ENCODE measurements at regions of chr11 and their contacts with region 1.

Region 1: DNA sequence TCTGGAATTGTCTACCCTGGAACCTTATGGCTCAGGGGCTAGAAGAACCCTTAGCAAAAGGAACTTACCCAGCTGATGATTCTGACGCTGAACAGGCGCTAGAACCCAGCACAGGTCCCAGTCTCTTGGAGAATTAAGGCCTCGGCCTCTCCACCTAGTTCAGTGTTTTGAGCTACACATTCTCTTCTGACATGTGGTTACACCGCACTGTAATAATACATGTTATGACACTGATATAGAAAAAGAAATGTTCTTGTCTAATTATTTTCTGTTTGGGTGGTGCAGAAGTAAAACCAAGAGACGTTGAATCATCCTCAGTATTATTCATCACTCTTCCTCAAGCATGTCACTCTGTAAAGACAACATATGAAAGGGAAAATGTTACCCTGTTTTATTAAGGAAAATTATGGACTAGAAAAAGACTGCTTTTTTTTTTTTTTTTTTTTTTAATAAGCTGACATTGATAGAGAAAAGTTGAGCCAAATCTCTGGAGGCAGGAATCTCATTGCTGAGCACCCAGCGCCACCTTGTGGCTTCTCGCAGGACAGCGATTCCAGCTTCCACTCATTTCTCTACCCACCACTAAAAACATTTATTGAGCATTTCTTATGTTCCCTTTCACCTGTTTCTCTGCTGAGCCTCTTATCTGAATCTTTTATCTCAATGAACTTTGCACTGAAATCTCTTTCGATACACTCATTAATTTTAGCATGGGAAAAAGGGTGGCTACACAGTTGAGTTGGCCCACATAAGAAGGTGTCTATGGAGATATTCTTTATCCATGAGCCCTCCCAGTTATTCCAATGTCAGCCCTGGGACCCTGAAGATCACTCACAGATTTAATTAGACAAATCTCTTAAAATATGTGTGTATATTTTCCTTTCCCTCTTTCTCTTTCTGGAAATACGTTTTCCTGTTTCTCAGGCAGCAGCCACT is 12.6 kb upstream of the APLNR start:
- DNase-seq: peak; percentile 65 to 74
- ATAC-seq: peak; percentile 60 to 85 (median 70)
- H3K4me3 ChIP-seq: no peak overlapping the region
- H3K27ac ChIP-seq: peak overlapping the region; percentile 18
- H3K4me1 ChIP-seq: peaks cover 14% of the 10 kb centered on the region
- H3K27me3 ChIP-seq: peaks cover 0 to 6% (median 2%) of the 10 kb centered on the region in 3 donors
- CTCF ChIP-seq: peak; percentile 88

Region 2: DNA sequence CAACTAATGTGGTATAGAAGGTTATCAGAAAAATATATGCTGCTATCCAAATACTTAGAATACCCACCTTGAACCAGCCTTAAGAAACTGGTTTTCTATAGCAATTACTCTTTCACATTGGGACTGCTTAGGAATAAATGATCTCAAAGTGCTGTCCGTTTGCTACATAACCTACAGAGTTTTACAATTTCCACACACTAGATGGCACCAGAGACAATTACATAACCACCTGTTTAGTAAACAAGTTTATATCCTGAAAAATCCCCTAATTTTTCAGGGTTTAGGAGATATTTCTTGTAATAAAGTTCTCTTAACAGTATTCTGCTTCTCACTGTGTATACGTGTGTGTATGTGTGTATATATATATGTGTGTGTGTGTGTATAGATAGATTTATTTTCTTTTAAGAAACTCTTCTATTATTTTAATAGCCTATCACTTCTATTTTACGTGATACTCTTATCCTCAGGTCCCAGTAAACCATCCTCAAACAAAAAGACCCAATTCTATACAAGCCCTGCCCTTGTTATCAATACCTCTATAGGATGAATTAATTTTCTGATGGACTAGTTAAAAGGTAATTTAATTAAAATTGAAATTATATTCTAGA is 1306.8 kb before region 1 on chr11:
- intact Hi-C with region 1: loop called in 1 of 2 experiments (anchors 10 kb)
- DNase-seq: no peak
- ATAC-seq: no peak
- H3K4me3 ChIP-seq: no peak overlapping the region
- H3K27ac ChIP-seq: no peak overlapping the region
- H3K4me1 ChIP-seq: no peaks in the 10 kb centered on the region
- H3K27me3 ChIP-seq: no peaks in the 10 kb centered on the region
- CTCF ChIP-seq: peak; percentile 41

Region 3: GRCh38 chr11:56841210-56841810 is 408.3 kb before region 1 on chr11:
- intact Hi-C with region 1: loop called (anchors 2 to 10 kb)
- DNase-seq: peak; percentile 15 to 38
- ATAC-seq: peak in 3 of 4 donors; percentile 47 to 74 (median 64)
- H3K4me3 ChIP-seq: no peak overlapping the region
- H3K27ac ChIP-seq: no peak overlapping the region
- H3K4me1 ChIP-seq: no peaks in the 10 kb centered on the region
- H3K27me3 ChIP-seq: peaks cover 0 to 2% (median 0%) of the 10 kb centered on the region in 3 donors
- CTCF ChIP-seq: peak; percentile 71

Region 4: GRCh38 chr11:57116654-57117053 is 133.0 kb before region 1 on chr11:
- intact Hi-C with region 1: loop called (anchors 5 kb)
- DNase-seq: peak in 1 of 2 donors; percentile 24
- ATAC-seq: peak in 3 of 4 donors; percentile 34 to 66 (median 63)
- H3K4me3 ChIP-seq: no peak overlapping the region
- H3K27ac ChIP-seq: no peak overlapping the region
- H3K4me1 ChIP-seq: no peaks in the 10 kb centered on the region
- H3K27me3 ChIP-seq: no peaks in the 10 kb centered on the region
- CTCF ChIP-seq: peak; percentile 51

Region 5: GRCh38 chr11:57131080-57131790 is 118.4 kb before region 1 on chr11:
- intact Hi-C with region 1: loop called in 1 of 2 experiments (anchors 2 kb)
- DNase-seq: peak in 1 of 2 donors; percentile 23
- ATAC-seq: peak in 2 of 4 donors; percentile 50 to 54
- H3K4me3 ChIP-seq: no peak overlapping the region
- H3K27ac ChIP-seq: no peak overlapping the region
- H3K4me1 ChIP-seq: no peaks in the 10 kb centered on the region
- H3K27me3 ChIP-seq: no peaks in the 10 kb centered on the region
- CTCF ChIP-seq: peak; percentile 49